CD8-positive, alpha-beta memory T cell (primary cell): ENCODE measurements at regions of chr11 and their contacts with region 1.

Region 1: GRCh38 chr11:123054301-123055065 is 7.5 kb downstream of the HSPA8 start:
- DNase-seq: peak in 2 of 5 donors; percentile 65 to 69
- H3K4me3 ChIP-seq: no peak overlapping the region
- H3K4me3 Mint-ChIP-seq: peak overlapping the region in 5 of 7 donors; percentile 36 to 73 (median 65)
- H3K27ac ChIP-seq: no peak overlapping the region
- H3K27ac Mint-ChIP-seq: peak overlapping the region; percentile 14 to 99 (median 93)
- H3K4me1 ChIP-seq: peaks cover 52% of the 10 kb centered on the region
- H3K4me1 Mint-ChIP-seq: peaks cover 57 to 66% (median 62%) of the 10 kb centered on the region in 3 donors
- H3K27me3 ChIP-seq: no peaks in the 10 kb centered on the region
- H3K27me3 Mint-ChIP-seq: no peaks in the 10 kb centered on the region

Region 2: GRCh38 chr11:123020968-123021367 is 33.5 kb before region 1 on chr11:
- CTCF ChIA-PET with region 1: interaction called, 65 read pairs
- POLR2A ChIA-PET with region 1: no interaction called
- DNase-seq: peak in 2 of 5 donors; percentile 7 to 18
- H3K4me3 ChIP-seq: no peak overlapping the region
- H3K4me3 Mint-ChIP-seq: no peak overlapping the region
- H3K27ac ChIP-seq: no peak overlapping the region
- H3K27ac Mint-ChIP-seq: peak overlapping the region in 1 of 8 donors; percentile 40
- H3K4me1 ChIP-seq: no peaks in the 10 kb centered on the region
- H3K4me1 Mint-ChIP-seq: peaks cover 5 to 10% (median 8%) of the 10 kb centered on the region in 3 donors
- H3K27me3 ChIP-seq: no peaks in the 10 kb centered on the region
- H3K27me3 Mint-ChIP-seq: peaks cover 5 to 12% of the 10 kb centered on the region in 2 donors

Region 3: DNA sequence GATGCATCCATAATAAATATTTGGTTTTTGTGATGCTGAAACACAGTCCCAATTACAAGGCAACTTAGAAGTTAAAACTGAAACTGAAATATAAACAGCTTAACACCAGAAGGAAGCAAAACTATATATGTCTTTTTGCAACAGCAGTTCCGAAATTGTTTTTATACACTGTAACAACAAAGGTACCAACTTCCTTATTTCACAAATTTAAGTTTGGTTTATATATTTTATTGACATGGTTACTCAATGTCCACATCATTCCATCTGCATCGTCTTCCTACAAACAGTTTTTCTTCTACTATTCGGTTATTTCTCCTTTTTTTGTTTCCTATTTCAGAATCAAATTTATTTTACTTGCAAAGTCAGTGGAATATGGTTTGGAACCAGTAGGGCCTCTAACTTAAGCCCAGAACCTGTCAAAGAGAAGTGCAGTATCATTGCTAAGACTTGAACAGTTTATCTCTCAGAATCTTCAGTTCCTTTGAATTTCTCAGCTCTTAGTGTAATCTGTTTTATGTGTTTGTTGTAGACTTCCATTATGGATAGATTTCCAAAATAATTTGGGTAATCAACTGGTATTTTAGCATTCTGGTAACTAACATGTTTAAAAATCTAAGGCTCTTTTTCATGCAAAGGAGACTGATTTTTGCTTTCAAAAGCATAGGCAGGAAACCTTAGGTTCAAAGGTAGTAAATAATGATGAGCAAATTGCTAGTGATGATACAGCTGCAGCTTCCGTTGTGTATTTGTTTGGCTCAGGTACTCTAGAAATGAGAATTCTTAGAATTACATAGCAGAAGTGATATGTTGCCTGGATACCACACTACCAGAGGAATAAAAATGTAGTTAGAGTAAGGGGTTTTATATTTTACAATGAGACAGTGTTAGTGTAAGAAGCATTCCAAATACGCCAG is 15.7 kb after region 1 on chr11:
- CTCF ChIA-PET with region 1: interaction called, 22 read pairs
- POLR2A ChIA-PET with region 1: interaction called, 15 read pairs
- DNase-seq: peak in 1 of 5 donors; percentile 63
- H3K4me3 ChIP-seq: peak overlapping the region; percentile 48
- H3K4me3 Mint-ChIP-seq: peak overlapping the region; percentile 80 to 91 (median 87)
- H3K27ac ChIP-seq: peak overlapping the region; percentile 78
- H3K27ac Mint-ChIP-seq: peak overlapping the region; percentile 90 to 99 (median 96)
- H3K4me1 ChIP-seq: peaks cover 61% of the 10 kb centered on the region
- H3K4me1 Mint-ChIP-seq: peaks cover 53 to 72% (median 65%) of the 10 kb centered on the region in 3 donors
- H3K27me3 ChIP-seq: no peaks in the 10 kb centered on the region
- H3K27me3 Mint-ChIP-seq: no peaks in the 10 kb centered on the region

Region 4: GRCh38 chr11:123103326-123103980 is 49.0 kb after region 1 on chr11:
- CTCF ChIA-PET with region 1: interaction called, 110 read pairs
- POLR2A ChIA-PET with region 1: no interaction called
- DNase-seq: peak in 3 of 5 donors; percentile 24 to 51 (median 40)
- H3K4me3 ChIP-seq: no peak overlapping the region
- H3K4me3 Mint-ChIP-seq: no peak overlapping the region
- H3K27ac ChIP-seq: no peak overlapping the region
- H3K27ac Mint-ChIP-seq: peak overlapping the region in 3 of 8 donors; percentile 7 to 54 (median 21)
- H3K4me1 ChIP-seq: peaks cover 9% of the 10 kb centered on the region
- H3K4me1 Mint-ChIP-seq: peaks cover 11 to 17% (median 15%) of the 10 kb centered on the region in 3 donors
- H3K27me3 ChIP-seq: no peaks in the 10 kb centered on the region
- H3K27me3 Mint-ChIP-seq: peaks cover 0 to under 1% of the 10 kb centered on the region in 2 donors

Region 5: DNA sequence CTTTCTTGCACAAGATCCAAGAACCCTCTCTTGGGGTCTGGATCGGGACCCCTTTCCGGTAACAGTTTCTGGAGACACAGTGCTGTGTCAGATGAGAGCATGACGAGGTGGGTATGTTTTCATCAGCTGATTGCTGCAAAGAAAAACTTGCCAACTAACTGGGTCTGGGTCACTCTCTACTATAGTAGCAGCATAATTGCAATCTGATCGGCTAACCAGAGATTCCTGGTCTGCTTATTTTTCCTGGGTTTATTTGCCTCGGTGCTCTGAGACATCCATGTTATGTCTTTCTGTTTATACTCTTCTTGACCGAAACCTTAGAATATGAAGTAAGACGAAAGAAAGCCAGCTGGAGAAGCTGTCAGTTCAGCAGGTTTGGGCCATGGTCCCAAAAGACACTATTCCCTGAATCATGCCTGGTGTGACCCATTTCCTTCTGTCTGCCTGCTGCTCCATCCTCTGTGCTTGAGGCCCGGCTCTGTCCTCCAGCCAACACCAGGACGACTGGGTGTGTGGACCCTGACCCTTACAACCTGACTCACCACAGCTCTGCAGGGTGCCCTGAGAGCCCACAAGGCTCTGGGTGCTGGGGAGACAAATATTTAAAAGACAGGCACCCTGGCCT is 164.7 kb after region 1 on chr11:
- CTCF ChIA-PET with region 1: no interaction called
- POLR2A ChIA-PET with region 1: no interaction called
- DNase-seq: no peak
- H3K4me3 ChIP-seq: no peak overlapping the region
- H3K4me3 Mint-ChIP-seq: no peak overlapping the region
- H3K27ac ChIP-seq: no peak overlapping the region
- H3K27ac Mint-ChIP-seq: no peak overlapping the region
- H3K4me1 ChIP-seq: no peaks in the 10 kb centered on the region
- H3K4me1 Mint-ChIP-seq: no peaks in the 10 kb centered on the region
- H3K27me3 ChIP-seq: no peaks in the 10 kb centered on the region
- H3K27me3 Mint-ChIP-seq: peaks cover 10 to 55% of the 10 kb centered on the region in 2 donors